ENCODE measurements at regions of chr2 and their contacts with region 1.

Region 1: DNA sequence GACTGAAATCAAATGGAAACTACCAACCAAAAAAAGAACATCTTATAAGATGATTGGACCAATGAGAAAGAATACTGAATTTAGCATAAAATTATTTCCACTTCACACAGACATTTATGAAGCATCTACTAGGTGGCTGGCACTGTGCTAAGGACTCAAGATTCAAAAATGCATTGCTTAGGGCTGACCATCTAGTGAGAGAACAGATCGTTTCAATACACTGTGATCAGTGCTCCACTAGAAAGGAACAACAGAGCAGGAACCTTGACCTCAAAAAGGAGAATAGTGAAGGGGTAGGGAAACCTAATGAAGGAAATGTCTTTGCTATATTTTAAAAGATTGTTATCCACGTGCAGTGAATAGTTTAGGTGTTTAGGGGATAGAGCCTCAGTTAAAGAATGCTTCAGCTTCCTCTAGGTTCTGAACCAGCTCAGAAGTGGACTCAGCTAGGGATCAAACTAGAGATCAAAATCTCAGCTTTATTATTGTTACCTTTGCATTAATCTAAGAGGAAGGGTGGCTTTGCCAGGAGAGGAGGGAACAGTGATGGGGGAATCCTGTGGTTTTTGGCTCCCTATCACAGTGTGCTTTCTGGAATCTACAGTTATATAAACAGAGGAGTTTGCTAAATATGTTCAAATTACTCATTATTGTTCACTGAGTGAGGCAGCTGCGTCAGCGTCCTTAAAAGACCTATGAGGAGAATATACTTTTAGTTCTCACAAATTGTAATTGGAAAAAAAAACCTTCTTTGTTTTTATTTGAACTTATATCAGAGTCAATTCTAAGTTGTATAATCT is 16.2 kb upstream of the BBS5 start:
- DNase-seq: peak in 2 of 9 donors; percentile 14 to 22
- ATAC-seq: no peak
- H3K4me3 ChIP-seq: no peak overlapping the region
- H3K4me3 Mint-ChIP-seq: no peak overlapping the region
- H3K27ac ChIP-seq: no peak overlapping the region
- H3K27ac Mint-ChIP-seq: peak overlapping the region in 1 of 9 donors; percentile 1
- H3K4me1 ChIP-seq: no peaks in the 10 kb centered on the region
- H3K4me1 Mint-ChIP-seq: peaks cover 0 to 3% (median 0%) of the 10 kb centered on the region in 7 donors
- H3K27me3 ChIP-seq: no peaks in the 10 kb centered on the region
- H3K27me3 Mint-ChIP-seq: peaks cover 0 to 3% (median 0%) of the 10 kb centered on the region in 5 donors

Region 2: DNA sequence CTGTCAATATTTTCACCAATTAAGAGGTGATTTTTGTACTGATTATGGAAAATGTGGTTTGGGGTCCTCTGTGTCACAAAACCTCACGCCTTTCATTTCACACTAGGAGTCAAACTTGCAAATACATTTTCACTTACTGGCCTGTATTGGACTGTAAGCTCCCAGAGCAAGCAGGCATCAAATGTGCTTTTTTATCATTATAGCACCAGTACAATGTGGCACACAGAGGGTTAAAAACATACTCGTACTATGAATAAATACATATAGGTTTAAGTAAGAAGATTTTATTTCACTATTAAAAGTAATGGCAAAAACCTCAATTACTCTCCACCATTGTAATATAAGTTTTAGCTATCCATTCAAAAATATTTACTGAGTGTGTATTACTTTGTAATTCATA is 488.7 kb before region 1 on chr2:
- CTCF ChIA-PET with region 1: no interaction called
- POLR2A ChIA-PET with region 1: no interaction called
- intact Hi-C with region 1: loop called in 1 of 2 experiments (anchors 5 kb)
- DNase-seq: no peak
- ATAC-seq: no peak
- H3K4me3 ChIP-seq: no peak overlapping the region
- H3K4me3 Mint-ChIP-seq: no peak overlapping the region
- H3K27ac ChIP-seq: no peak overlapping the region
- H3K27ac Mint-ChIP-seq: no peak overlapping the region
- H3K4me1 ChIP-seq: no peaks in the 10 kb centered on the region
- H3K4me1 Mint-ChIP-seq: peaks cover 0 to 4% (median 0%) of the 10 kb centered on the region in 7 donors
- H3K27me3 ChIP-seq: no peaks in the 10 kb centered on the region
- H3K27me3 Mint-ChIP-seq: peaks cover 0 to 1% (median 0%) of the 10 kb centered on the region in 5 donors

Region 3: GRCh38 chr2:169363560-169364150 is 99.4 kb before region 1 on chr2:
- CTCF ChIA-PET with region 1: no interaction called
- POLR2A ChIA-PET with region 1: no interaction called
- intact Hi-C with region 1: loop called in 1 of 2 experiments (anchors 5 kb)
- DNase-seq: peak in 8 of 9 donors; percentile 14 to 49 (median 38)
- ATAC-seq: peak; percentile 58
- H3K4me3 ChIP-seq: peak overlapping the region; percentile 89
- H3K4me3 Mint-ChIP-seq: peak overlapping the region; percentile 87 to 98 (median 94)
- H3K27ac ChIP-seq: no peak overlapping the region
- H3K27ac Mint-ChIP-seq: peak overlapping the region in 4 of 9 donors; percentile 14 to 88 (median 55)
- H3K4me1 ChIP-seq: peaks cover 11 to 18% of the 10 kb centered on the region in 2 donors
- H3K4me1 Mint-ChIP-seq: peaks cover 17 to 37% (median 29%) of the 10 kb centered on the region in 7 donors
- H3K27me3 ChIP-seq: peaks cover 4 to 15% of the 10 kb centered on the region in 2 donors
- H3K27me3 Mint-ChIP-seq: peaks cover 42 to 60% (median 49%) of the 10 kb centered on the region in 5 donors

Region 4: GRCh38 chr2:169562519-169562918 is 99.4 kb after region 1 on chr2:
- CTCF ChIA-PET with region 1: no interaction called
- POLR2A ChIA-PET with region 1: interaction called, 4 read pairs
- intact Hi-C with region 1: loop called in 1 of 2 experiments (anchors 5 kb)
- DNase-seq: peak in 3 of 9 donors; percentile 4 to 26 (median 12)
- ATAC-seq: no peak
- H3K4me3 ChIP-seq: no peak overlapping the region
- H3K4me3 Mint-ChIP-seq: peak overlapping the region in 2 of 10 donors; percentile 6 to 44
- H3K27ac ChIP-seq: no peak overlapping the region
- H3K27ac Mint-ChIP-seq: peak overlapping the region in 7 of 9 donors; percentile 5 to 90 (median 73)
- H3K4me1 ChIP-seq: no peaks in the 10 kb centered on the region
- H3K4me1 Mint-ChIP-seq: peaks cover 0 to under 1% (median 0%) of the 10 kb centered on the region in 7 donors
- H3K27me3 ChIP-seq: no peaks in the 10 kb centered on the region
- H3K27me3 Mint-ChIP-seq: no peaks in the 10 kb centered on the region

Measured in naive thymus-derived CD4-positive, alpha-beta T cell (primary cell).